Heart left ventricle (tissue), 16 donors: ENCODE measurements at regions of chr1 and their contacts with region 1.

Region 1: DNA sequence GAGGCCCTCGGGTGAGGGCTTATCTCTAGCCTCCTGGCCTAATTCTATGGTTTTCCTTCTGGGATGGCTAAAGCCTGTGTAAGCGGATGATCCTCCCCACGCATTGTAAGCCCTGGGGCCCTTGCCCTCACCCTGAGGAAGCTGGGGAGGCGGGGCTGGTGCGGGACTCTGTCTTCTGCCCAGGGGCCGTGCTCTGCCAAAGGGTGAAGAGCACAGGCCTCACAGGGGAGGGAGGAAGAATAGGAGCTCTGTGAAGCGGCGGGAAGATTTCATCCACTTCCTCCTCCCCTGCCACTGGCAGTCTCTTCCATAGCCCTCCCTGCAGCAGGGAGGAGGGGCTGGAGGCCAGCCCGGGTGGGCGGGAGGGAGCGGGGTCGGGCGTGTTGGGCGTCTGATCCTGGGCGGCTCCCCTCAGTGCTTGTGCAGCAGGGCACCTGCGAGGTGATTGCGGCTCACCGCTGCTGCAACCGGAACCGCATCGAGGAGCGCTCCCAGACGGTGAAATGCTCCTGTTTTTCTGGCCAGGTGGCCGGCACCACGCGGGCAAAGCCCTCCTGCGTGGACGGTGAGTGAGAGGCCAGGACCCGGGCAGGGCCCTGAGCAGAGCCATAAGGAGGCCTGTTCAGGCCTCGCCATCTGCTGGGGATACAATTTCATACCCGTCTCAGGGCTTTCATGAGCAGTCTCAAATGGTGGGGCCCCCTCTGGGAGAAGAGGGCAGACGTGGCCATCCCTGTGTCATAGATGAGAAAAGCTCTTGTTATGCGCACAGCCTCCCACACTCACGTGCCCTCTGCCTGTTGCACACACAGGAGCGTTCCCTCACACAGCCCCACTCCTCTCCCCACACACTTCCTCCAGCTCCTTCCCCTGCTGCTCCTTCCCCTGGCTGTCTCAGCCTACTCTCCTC is 7.7 kb upstream of the PPM1J start:
- DNase-seq: no peak
- ATAC-seq: peak in 3 of 4 donors; percentile 19 to 44 (median 31)
- H3K4me3 ChIP-seq: peak overlapping the region in 10 of 12 donors; percentile 12 to 42 (median 28)
- H3K27ac ChIP-seq: no peak overlapping the region
- H3K4me1 ChIP-seq: peaks cover 0 to 21% (median 10%) of the 10 kb centered on the region in 12 donors
- H3K27me3 ChIP-seq: peaks cover 0 to 12% (median 0%) of the 10 kb centered on the region in 9 donors
- CTCF ChIP-seq: no peak
- POLR2A ChIP-seq: no peak

Region 2: GRCh38 chr1:112866151-112866550 is 143.3 kb after region 1 on chr1:
- intact Hi-C with region 1: loop called in 1 of 10 experiments (anchors 10 kb)
- DNase-seq: no peak
- ATAC-seq: no peak
- H3K4me3 ChIP-seq: no peak overlapping the region
- H3K27ac ChIP-seq: no peak overlapping the region
- H3K4me1 ChIP-seq: no peaks in the 10 kb centered on the region
- H3K27me3 ChIP-seq: no peaks in the 10 kb centered on the region
- CTCF ChIP-seq: no peak
- POLR2A ChIP-seq: no peak

Region 3: GRCh38 chr1:113053344-113054126 is 330.7 kb after region 1 on chr1:
- intact Hi-C with region 1: loop called in 1 of 10 experiments (anchors 5 kb)
- DNase-seq: no peak
- ATAC-seq: no peak
- H3K4me3 ChIP-seq: no peak overlapping the region
- H3K27ac ChIP-seq: no peak overlapping the region
- H3K4me1 ChIP-seq: peaks cover 0 to 9% (median under 1%) of the 10 kb centered on the region in 12 donors
- H3K27me3 ChIP-seq: no peaks in the 10 kb centered on the region
- CTCF ChIP-seq: no peak
- POLR2A ChIP-seq: no peak